WTC11 (cell line): ENCODE measurements at regions of chr17 and their contacts with region 1.

Region 1: DNA sequence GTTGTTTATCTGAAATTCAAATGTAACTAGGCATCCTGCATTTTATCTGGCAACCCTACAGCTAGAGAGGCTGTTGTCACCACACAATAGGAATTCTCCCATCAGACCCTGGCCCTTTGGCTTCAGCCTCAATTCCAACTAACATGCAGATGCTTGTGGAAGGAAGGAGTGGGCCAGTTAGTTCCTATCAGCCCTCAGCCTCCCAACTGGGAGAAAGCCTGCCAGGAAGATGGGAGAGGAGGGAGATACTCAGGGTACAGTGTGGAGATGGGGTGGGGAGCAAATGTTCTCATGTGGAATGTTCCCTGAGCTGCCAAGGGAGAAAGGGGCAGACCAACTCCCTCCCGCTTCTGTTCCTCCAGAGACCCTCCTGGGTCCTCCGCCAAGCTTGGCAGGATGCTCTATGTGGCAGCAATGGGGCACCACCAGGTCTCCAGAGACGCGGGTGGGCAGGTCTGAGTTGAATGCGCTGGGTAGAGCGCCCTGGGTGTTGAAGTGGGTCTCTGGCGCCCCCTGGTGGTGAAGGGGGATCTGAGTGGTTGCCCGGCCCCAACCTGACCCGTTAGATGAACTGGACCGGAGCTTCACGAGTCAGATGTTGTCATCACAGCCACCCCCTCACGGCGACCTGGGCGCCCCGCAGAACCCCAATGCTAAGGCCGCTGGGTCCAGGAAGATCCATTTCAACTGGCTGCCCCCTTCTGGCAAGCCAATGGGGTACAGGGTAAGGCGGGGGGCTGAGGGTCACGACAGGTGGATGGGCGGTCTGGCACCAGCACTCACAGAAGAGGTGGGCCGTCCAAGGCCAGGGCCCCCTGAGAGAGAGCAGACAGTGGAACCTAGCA is 15.2 kb downstream of the GALK1 start:
- DNase-seq: peak; percentile 91
- ATAC-seq: peak; percentile 67
- H3K4me3 Mint-ChIP-seq: no peak overlapping the region
- H3K27ac Mint-ChIP-seq: no peak overlapping the region
- H3K4me1 Mint-ChIP-seq: peaks cover 4% of the 10 kb centered on the region
- H3K27me3 Mint-ChIP-seq: peaks cover 7% of the 10 kb centered on the region
- CTCF ChIP-seq: peak; percentile 98

Region 2: GRCh38 chr17:75619506-75620431 is 130.0 kb before region 1 on chr17:
- CTCF ChIA-PET with region 1: interaction called, 93 read pairs
- POLR2A ChIA-PET with region 1: no interaction called
- DNase-seq: peak; percentile 88
- ATAC-seq: peak; percentile 89
- H3K4me3 Mint-ChIP-seq: no peak overlapping the region
- H3K27ac Mint-ChIP-seq: no peak overlapping the region
- H3K4me1 Mint-ChIP-seq: no peaks in the 10 kb centered on the region
- H3K27me3 Mint-ChIP-seq: no peaks in the 10 kb centered on the region
- CTCF ChIP-seq: peak; percentile 54; the same call in 1 of the 2 replicates

Region 3: GRCh38 chr17:75652915-75653549 is 96.7 kb before region 1 on chr17:
- CTCF ChIA-PET with region 1: interaction called, 66 read pairs
- POLR2A ChIA-PET with region 1: no interaction called
- DNase-seq: peak; percentile 76
- ATAC-seq: peak; percentile 99
- H3K4me3 Mint-ChIP-seq: no peak overlapping the region
- H3K27ac Mint-ChIP-seq: peak overlapping the region; percentile 71; the same call in 1 of the 2 replicates
- H3K4me1 Mint-ChIP-seq: no peaks in the 10 kb centered on the region
- H3K27me3 Mint-ChIP-seq: no peaks in the 10 kb centered on the region
- CTCF ChIP-seq: peak; percentile 66; the same call in 1 of the 2 replicates

Region 4: GRCh38 chr17:75707131-75707571 is 42.6 kb before region 1 on chr17:
- CTCF ChIA-PET with region 1: interaction called, 12 read pairs
- POLR2A ChIA-PET with region 1: interaction called, 4 read pairs
- DNase-seq: no peak
- ATAC-seq: no peak
- H3K4me3 Mint-ChIP-seq: no peak overlapping the region
- H3K27ac Mint-ChIP-seq: peak overlapping the region; percentile 11; the same call in 1 of the 2 replicates
- H3K4me1 Mint-ChIP-seq: no peaks in the 10 kb centered on the region
- H3K27me3 Mint-ChIP-seq: no peaks in the 10 kb centered on the region
- CTCF ChIP-seq: no peak

Region 5: DNA sequence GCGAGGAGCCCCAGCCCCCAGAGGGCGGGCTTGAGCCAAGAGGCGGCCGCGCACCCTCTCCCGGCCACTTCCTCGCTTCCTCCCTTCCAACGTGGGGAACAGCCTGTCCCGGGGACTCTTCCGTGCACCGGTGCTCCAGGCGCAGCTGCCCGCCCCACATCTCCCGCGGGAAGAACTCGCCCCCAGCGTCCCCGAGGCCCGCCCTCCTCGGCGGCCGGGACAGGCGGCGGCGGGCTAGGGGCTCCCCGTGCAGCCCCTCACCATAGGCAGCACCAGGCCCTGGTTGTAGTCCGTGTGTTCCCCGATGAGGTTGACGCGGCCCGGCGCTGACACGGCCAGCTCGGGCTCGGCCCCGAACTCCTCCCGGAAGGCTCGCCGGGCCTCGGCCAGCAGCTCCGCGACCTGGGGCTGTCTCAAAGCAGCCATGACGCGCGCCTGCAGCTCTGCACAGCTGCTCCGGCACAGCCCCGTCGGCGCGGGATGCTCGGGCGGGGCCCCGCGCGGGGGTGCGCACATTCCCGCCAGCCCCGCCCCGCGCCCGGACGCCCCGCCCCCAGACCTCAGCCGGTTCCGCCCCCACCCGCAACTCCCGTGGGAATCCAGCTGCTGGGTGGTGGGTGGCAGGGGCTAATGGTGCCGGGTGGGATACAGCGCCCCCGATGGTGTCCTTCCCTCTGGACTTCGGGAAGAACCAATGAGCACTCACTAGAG is 15.1 kb after region 1 on chr17 and contains the start of gene GALK1:
- CTCF ChIA-PET with region 1: interaction called, 318 read pairs
- POLR2A ChIA-PET with region 1: interaction called, 13 read pairs
- DNase-seq: peak; percentile 67
- ATAC-seq: peak; percentile 76
- H3K4me3 Mint-ChIP-seq: peak within 1 kb of the TSS; percentile 75
- H3K27ac Mint-ChIP-seq: peak within 1 kb of the TSS; percentile 92
- H3K4me1 Mint-ChIP-seq: peaks cover 9% of the 10 kb centered on the region
- H3K27me3 Mint-ChIP-seq: no peaks in the 10 kb centered on the region
- CTCF ChIP-seq: no peak
- total RNA-seq, gene GALK1: 42.2 to 49.9 TPM (median 49.4 TPM) in 3 replicates

Region 6: GRCh38 chr17:75855310-75856081 is 105.7 kb after region 1 on chr17 and contains the start of gene WBP2:
- CTCF ChIA-PET with region 1: interaction called, 18 read pairs
- POLR2A ChIA-PET with region 1: interaction called, 4 read pairs
- DNase-seq: peak; percentile 98
- ATAC-seq: peak; percentile 92
- H3K4me3 Mint-ChIP-seq: no peak within 1 kb of the TSS
- H3K27ac Mint-ChIP-seq: peak within 1 kb of the TSS; percentile 98
- H3K4me1 Mint-ChIP-seq: peaks cover 12% of the 10 kb centered on the region
- H3K27me3 Mint-ChIP-seq: no peaks in the 10 kb centered on the region
- CTCF ChIP-seq: no peak
- total RNA-seq, gene WBP2: 64.3 to 69.4 TPM (median 68.8 TPM) in 3 replicates